ENCODE measurements at regions of chr1 and their contacts with region 1.

Region 1: DNA sequence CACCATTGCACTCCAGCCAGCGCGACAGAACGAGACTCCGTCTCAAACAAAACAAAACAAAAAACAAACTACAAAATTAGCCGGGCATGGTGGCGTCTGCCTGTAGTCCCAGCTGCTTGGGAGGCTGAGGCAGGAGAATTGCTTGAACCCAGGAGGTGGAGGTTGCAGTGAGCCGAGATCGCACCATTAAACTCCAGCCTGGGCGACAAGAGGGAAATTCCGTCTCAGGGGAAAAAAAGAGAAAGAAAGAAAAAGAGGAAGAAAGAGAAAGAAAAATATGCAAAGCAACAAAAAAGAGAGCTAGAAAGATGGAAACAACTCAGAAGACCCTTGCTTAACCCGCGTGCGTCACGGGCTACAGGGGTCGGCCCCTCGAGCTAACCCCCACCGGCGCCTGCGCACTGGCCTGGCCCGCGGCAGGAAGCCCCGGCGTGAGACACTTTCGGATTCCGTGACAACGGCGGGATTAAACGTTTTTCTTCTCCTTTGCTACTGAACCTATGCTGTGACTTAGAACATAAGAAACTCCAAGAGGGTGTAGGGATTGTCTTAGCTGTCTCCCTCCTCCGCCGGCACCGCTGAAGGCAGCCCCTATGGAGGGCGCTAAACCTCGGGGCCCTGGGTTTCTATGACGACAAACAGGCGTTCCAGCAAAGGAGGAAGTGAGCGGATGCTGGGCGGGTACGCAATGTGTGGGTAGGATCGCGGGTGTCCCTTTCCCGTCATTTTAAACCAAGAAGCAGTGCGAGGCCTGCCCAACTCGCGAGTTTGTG is at the start of gene AXDND1:
- DNase-seq: peak; percentile 91
- H3K4me3 Mint-ChIP-seq: peak within 1 kb of the TSS; percentile 95
- H3K27ac Mint-ChIP-seq: peak within 1 kb of the TSS; percentile 99
- H3K4me1 Mint-ChIP-seq: peaks cover 13% of the 10 kb centered on the region
- H3K27me3 Mint-ChIP-seq: no peaks in the 10 kb centered on the region
- total RNA-seq, gene AXDND1: 0.58 TPM in 1 of 2 experiments, not detected in the other

Region 2: GRCh38 chr1:179081687-179082332 is 283.7 kb before region 1 on chr1 and contains the start of gene TOR3A:
- CTCF ChIA-PET with region 1: interaction called, 37 read pairs
- POLR2A ChIA-PET with region 1: interaction called, 11 read pairs
- DNase-seq: peak; percentile 88
- H3K4me3 Mint-ChIP-seq: peak within 1 kb of the TSS; percentile 98
- H3K27ac Mint-ChIP-seq: peak within 1 kb of the TSS; percentile 94
- H3K4me1 Mint-ChIP-seq: peaks cover 35% of the 10 kb centered on the region
- H3K27me3 Mint-ChIP-seq: no peaks in the 10 kb centered on the region
- total RNA-seq, gene TOR3A: 47.1 to 51.5 TPM

Region 3: GRCh38 chr1:179121159-179121938 is 244.2 kb before region 1 on chr1:
- CTCF ChIA-PET with region 1: interaction called, 57 read pairs
- POLR2A ChIA-PET with region 1: interaction called, 3 read pairs
- DNase-seq: peak; percentile 44
- H3K4me3 Mint-ChIP-seq: no peak overlapping the region
- H3K27ac Mint-ChIP-seq: no peak overlapping the region
- H3K4me1 Mint-ChIP-seq: peaks cover 8% of the 10 kb centered on the region
- H3K27me3 Mint-ChIP-seq: no peaks in the 10 kb centered on the region

Region 4: DNA sequence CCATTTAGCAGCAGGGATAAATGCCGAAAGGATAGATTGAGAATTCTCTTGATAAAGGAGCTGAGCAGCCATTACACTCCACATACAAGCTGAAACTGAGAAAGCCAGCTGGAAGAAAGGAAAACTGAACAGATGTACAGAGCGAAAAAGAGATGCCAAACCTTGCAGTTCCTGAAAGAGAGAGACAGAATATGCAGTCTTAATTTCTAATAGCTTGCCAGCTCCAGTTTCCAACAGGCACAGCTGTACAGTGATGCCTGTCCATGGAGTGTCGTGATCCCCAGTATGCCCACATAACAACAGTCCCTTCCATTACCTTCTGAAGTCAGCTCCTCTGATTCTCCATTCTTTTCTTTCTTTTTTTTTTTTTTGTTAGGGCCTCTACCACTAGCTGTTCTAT is 158.7 kb before region 1 on chr1:
- CTCF ChIA-PET with region 1: no interaction called
- POLR2A ChIA-PET with region 1: no interaction called
- DNase-seq: no peak
- H3K4me3 Mint-ChIP-seq: no peak overlapping the region
- H3K27ac Mint-ChIP-seq: no peak overlapping the region
- H3K4me1 Mint-ChIP-seq: peaks cover 5% of the 10 kb centered on the region
- H3K27me3 Mint-ChIP-seq: no peaks in the 10 kb centered on the region

Region 5: DNA sequence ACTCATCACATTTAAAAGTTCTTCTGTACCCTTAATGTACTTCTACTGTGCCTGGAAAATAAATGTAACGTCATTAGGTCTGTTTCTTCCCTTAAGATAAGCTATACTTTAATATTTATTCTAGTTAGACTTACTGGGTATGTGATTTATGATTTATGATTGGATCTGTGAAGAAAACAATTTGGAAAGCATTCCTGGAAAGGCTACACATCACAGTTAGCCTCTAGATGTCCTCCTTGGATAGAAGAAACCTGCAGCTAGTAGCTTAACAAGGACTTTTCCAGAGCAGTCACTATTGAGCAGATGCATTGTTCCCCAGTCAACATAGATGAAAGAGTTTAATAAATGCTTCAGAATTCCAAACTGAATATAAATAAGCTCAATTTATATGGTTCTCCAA is 113.8 kb before region 1 on chr1:
- CTCF ChIA-PET with region 1: interaction called, 10 read pairs
- POLR2A ChIA-PET with region 1: no interaction called
- DNase-seq: no peak
- H3K4me3 Mint-ChIP-seq: no peak overlapping the region
- H3K27ac Mint-ChIP-seq: no peak overlapping the region
- H3K4me1 Mint-ChIP-seq: no peaks in the 10 kb centered on the region
- H3K27me3 Mint-ChIP-seq: no peaks in the 10 kb centered on the region

Region 6: GRCh38 chr1:179293340-179294327 is 71.9 kb before region 1 on chr1 and contains the start of gene SOAT1:
- CTCF ChIA-PET with region 1: interaction called, 33 read pairs
- POLR2A ChIA-PET with region 1: interaction called, 22 read pairs
- DNase-seq: peak; percentile 93
- H3K4me3 Mint-ChIP-seq: peak within 1 kb of the TSS; percentile 95
- H3K27ac Mint-ChIP-seq: peak within 1 kb of the TSS; percentile 89
- H3K4me1 Mint-ChIP-seq: peaks cover 41% of the 10 kb centered on the region
- H3K27me3 Mint-ChIP-seq: no peaks in the 10 kb centered on the region
- total RNA-seq, gene SOAT1: 55.7 to 58.3 TPM

Measured in activated CD4-positive, alpha-beta memory T cell treated with anti-CD3 and anti-CD28 coated beads, Interleukin-2, amount 10 ng/mL, durations not matched to agents 7 days and 5 days (primary cell).